Activated naive CD4-positive, alpha-beta T cell treated with anti-CD3 and anti-CD28 coated beads for 36 hours (primary cell): ENCODE measurements at regions of chr1 and their contacts with region 1.

Region 1: GRCh38 chr1:175154629-175155472 is 37.7 kb downstream of the KIAA0040 start:
- DNase-seq: peak; percentile 87
- H3K4me3 Mint-ChIP-seq: no peak overlapping the region
- H3K27ac Mint-ChIP-seq: no peak overlapping the region
- H3K4me1 Mint-ChIP-seq: peaks cover 24% of the 10 kb centered on the region
- H3K27me3 Mint-ChIP-seq: peaks cover 25% of the 10 kb centered on the region

Region 2: GRCh38 chr1:175035865-175036264 is 119.0 kb before region 1 on chr1:
- CTCF ChIA-PET with region 1: interaction called, 12 read pairs
- intact Hi-C with region 1: no loop called
- DNase-seq: no peak
- H3K4me3 Mint-ChIP-seq: no peak overlapping the region
- H3K27ac Mint-ChIP-seq: no peak overlapping the region
- H3K4me1 Mint-ChIP-seq: no peaks in the 10 kb centered on the region
- H3K27me3 Mint-ChIP-seq: no peaks in the 10 kb centered on the region

Region 3: GRCh38 chr1:175192630-175193526 is 38.0 kb after region 1 on chr1 and contains the start of gene KIAA0040:
- CTCF ChIA-PET with region 1: interaction called, 30 read pairs
- intact Hi-C with region 1: loop called (anchors 1 kb)
- DNase-seq: peak; percentile 63
- H3K4me3 Mint-ChIP-seq: peak within 1 kb of the TSS; percentile 92
- H3K27ac Mint-ChIP-seq: peak within 1 kb of the TSS; percentile 93
- H3K4me1 Mint-ChIP-seq: peaks cover 45% of the 10 kb centered on the region
- H3K27me3 Mint-ChIP-seq: no peaks in the 10 kb centered on the region
- total RNA-seq, gene KIAA0040: 19.5 to 21.4 TPM

Region 4: GRCh38 chr1:175319418-175320230 is 164.8 kb after region 1 on chr1:
- CTCF ChIA-PET with region 1: interaction called, 261 read pairs
- intact Hi-C with region 1: loop called (anchors 1 kb)
- DNase-seq: peak; percentile 80
- H3K4me3 Mint-ChIP-seq: no peak overlapping the region
- H3K27ac Mint-ChIP-seq: no peak overlapping the region
- H3K4me1 Mint-ChIP-seq: peaks cover 12% of the 10 kb centered on the region
- H3K27me3 Mint-ChIP-seq: no peaks in the 10 kb centered on the region

Region 5: GRCh38 chr1:175742790-175743459 is 588.1 kb after region 1 on chr1:
- CTCF ChIA-PET with region 1: interaction called, 3 read pairs
- intact Hi-C with region 1: loop called (anchors 5 kb)
- DNase-seq: no peak
- H3K4me3 Mint-ChIP-seq: no peak overlapping the region
- H3K27ac Mint-ChIP-seq: no peak overlapping the region
- H3K4me1 Mint-ChIP-seq: no peaks in the 10 kb centered on the region
- H3K27me3 Mint-ChIP-seq: peaks cover 18% of the 10 kb centered on the region

Region 6: DNA sequence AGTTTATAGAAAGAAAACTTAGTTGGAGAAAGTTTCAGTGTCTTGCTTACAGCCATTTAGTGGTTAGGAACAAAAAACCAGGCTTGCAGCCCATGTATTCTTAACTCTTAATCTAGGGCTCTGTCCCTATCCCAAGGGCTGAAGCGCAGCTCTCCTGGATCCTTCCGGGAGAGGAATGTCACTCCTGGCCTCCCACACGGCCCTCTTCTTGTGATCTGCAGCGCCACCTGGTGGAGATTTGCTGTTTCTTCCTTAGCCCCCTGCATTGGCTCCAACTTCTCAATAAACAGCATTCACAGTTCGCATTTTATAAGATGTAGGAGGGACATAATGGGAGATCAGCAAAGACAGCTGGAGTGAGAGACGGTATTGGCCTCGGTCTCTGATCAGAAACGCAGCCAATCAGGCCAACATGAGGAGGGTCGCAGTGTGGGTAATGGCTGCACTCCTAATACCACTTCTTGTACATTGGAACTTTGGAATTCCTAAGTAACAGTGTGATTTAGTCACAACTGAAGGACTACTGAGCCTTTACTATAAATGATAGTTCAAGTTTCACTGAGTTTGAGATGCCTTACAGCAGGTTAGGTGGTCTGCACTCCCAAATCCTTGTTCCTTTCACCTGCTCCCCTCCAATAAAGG is 1726.2 kb after region 1 on chr1:
- CTCF ChIA-PET with region 1: no interaction called
- intact Hi-C with region 1: loop called (anchors 5 kb)
- DNase-seq: peak; percentile 65
- H3K4me3 Mint-ChIP-seq: no peak overlapping the region
- H3K27ac Mint-ChIP-seq: no peak overlapping the region
- H3K4me1 Mint-ChIP-seq: no peaks in the 10 kb centered on the region
- H3K27me3 Mint-ChIP-seq: no peaks in the 10 kb centered on the region